H1 (cell line): ENCODE measurements at regions of chr5 and their contacts with region 1.

Region 1: GRCh38 chr5:139844472-139845145 is 49.0 kb downstream of the PSD2 start:
- DNase-seq: peak; percentile 64 to 92
- H3K4me3 ChIP-seq: no peak overlapping the region
- H3K27ac ChIP-seq: no peak overlapping the region
- H3K4me1 ChIP-seq: peaks cover 0 to 2% (median 1%) of the 10 kb centered on the region in 4 experiments; a peak in 5 of 7 replicates
- H3K27me3 ChIP-seq: peaks cover 16 to 50% (median 44%) of the 10 kb centered on the region in 4 experiments
- CTCF ChIP-seq: peak; percentile 93 to 97 (median 96)
- EP300 ChIP-seq: no peak
- POLR2A ChIP-seq: no peak
- RAD21 ChIP-seq: peak; percentile 88 to 90

Region 2: DNA sequence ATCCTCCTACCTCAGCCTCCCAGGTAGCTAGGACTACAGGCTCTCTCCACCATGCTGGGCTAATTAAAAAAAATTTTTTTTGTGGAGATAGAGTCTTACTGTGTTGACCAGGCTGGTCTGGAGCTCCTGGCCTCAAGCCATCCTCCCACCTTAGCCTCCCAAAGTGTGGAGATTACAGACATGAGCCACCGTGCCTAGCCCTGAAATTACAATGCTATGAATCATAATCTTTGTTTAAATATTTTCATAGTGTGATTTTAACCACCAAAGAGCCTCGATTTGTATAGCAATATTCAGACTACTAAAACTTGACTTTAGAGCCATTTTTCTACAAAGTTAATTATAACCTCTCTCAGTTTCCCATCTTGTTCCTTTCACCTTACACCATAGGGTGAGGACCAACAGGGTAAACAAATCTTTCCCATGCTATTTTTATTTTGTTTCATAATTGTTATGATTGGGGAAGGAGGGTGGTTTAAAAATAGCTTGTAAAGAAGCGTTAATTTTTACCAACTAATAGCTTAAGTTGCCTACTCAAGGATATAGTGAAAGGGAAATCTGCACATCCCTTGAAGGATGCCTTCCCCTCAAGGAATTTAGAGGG is 250.8 kb before region 1 on chr5:
- CTCF ChIA-PET with region 1: no interaction called
- POLR2A ChIA-PET with region 1: no interaction called
- DNase-seq: no peak
- H3K4me3 ChIP-seq: no peak overlapping the region
- H3K27ac ChIP-seq: no peak overlapping the region
- H3K4me1 ChIP-seq: peaks cover 0 to 2% (median 0%) of the 10 kb centered on the region in 4 experiments; a peak in 1 of 7 replicates
- H3K27me3 ChIP-seq: no peaks in the 10 kb centered on the region
- CTCF ChIP-seq: no peak
- EP300 ChIP-seq: no peak
- POLR2A ChIP-seq: no peak
- RAD21 ChIP-seq: no peak

Region 3: DNA sequence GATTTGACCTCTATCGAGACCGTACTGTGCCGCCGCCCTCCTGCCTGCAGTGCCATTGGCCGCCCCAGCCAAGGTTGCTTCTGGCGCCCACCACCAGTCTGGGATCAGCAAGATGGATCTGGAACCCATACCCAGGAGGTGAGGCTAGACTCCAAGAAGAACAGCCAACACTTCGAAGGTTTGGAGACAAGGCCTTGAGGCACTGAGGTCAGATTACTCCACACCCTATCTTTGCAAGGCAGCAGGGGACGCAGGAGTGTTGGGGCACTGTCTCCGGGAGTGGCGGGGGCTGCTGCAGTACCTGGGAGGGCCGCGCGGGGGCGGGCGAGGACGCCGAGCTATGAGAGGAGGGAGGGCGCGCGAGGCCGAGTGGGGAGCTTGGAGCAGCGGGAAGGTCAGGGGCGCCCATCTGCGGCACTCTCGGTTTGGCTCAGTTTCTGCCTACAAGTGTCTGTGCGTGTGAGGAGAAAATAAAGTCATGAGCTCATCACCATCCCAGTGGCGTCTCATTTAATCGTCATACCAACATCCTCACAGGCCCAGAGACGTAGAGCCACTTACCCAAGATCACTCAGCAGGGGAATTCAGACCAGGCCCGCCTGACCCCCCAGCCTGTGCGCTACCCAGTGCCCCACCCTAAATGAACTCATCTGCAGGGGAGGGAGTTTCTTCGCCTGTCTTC is 69.5 kb before region 1 on chr5:
- CTCF ChIA-PET with region 1: interaction called, 37 read pairs
- POLR2A ChIA-PET with region 1: no interaction called
- DNase-seq: peak; percentile 63 to 100
- H3K4me3 ChIP-seq: peak overlapping the region in 1 of 4 experiments; percentile 28; a peak in 1 of 8 replicates
- H3K27ac ChIP-seq: no peak overlapping the region
- H3K4me1 ChIP-seq: peaks cover 0 to 5% (median 4%) of the 10 kb centered on the region in 4 experiments; a peak in 4 of 7 replicates
- H3K27me3 ChIP-seq: peaks cover 0 to 5% (median 2%) of the 10 kb centered on the region in 4 experiments; a peak in 3 of 7 replicates
- CTCF ChIP-seq: peak in 2 of 3 experiments; percentile 96 to 97; a peak in 3 of 4 replicates
- EP300 ChIP-seq: no peak
- POLR2A ChIP-seq: no peak
- RAD21 ChIP-seq: peak; percentile 61 to 73

Region 4: GRCh38 chr5:139795074-139796001 is 49.3 kb before region 1 on chr5 and contains the start of gene PSD2:
- CTCF ChIA-PET with region 1: interaction called, 75 read pairs
- POLR2A ChIA-PET with region 1: no interaction called
- DNase-seq: peak in 1 of 2 experiments; percentile 73
- H3K4me3 ChIP-seq: peak within 1 kb of the TSS; percentile 35 to 81 (median 50)
- H3K27ac ChIP-seq: no peak within 1 kb of the TSS
- H3K4me1 ChIP-seq: peaks cover 2 to 7% (median 2%) of the 10 kb centered on the region in 4 experiments; a peak in 3 of 7 replicates
- H3K27me3 ChIP-seq: peaks cover 41 to 74% (median 61%) of the 10 kb centered on the region in 4 experiments
- CTCF ChIP-seq: no peak
- EP300 ChIP-seq: no peak
- POLR2A ChIP-seq: no peak
- RAD21 ChIP-seq: no peak
- total RNA-seq, gene PSD2: 0.06 and 0.13 TPM in 2 replicates

Region 5: DNA sequence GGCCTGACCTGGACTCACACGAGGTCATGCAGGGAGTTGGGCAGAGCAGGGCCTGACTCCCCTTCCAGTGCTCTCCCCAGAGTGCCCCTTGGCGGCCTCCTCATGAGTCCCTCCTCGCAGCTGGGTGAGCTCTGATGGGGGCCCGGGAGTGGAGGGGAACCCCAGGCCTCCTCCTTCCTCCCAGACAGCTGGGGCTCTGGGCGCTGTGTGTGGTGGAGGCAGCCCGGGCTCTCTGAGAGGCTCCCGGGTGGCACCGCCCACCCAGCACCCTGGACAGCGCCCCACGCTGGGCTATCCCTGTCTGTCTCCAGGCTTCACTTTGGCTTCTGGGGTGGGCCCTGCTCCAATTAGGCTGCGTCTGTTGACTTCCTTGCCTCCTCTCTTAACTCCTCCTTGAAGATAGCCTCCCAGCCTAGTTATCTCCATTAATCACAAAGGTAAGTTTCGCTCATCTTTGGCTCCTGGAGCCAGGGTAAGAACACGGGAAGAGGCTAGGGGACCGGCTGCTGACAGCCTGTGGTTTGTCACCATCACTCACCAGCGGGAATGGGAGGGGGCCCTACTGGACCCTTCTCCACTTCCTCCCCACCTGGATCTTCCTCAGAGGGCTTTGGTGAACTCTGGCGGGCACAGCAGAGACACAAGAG is 36.0 kb before region 1 on chr5:
- CTCF ChIA-PET with region 1: interaction called, 34 read pairs
- POLR2A ChIA-PET with region 1: no interaction called
- DNase-seq: peak in 1 of 2 experiments; percentile 88
- H3K4me3 ChIP-seq: no peak overlapping the region
- H3K27ac ChIP-seq: no peak overlapping the region
- H3K4me1 ChIP-seq: no peaks in the 10 kb centered on the region
- H3K27me3 ChIP-seq: peaks cover 0 to 3% (median 1%) of the 10 kb centered on the region in 4 experiments; a peak in 1 of 7 replicates
- CTCF ChIP-seq: no peak
- EP300 ChIP-seq: no peak
- POLR2A ChIP-seq: no peak
- RAD21 ChIP-seq: no peak

Region 6: GRCh38 chr5:139822553-139823425 is 21.8 kb before region 1 on chr5:
- CTCF ChIA-PET with region 1: interaction called, 42 read pairs
- POLR2A ChIA-PET with region 1: interaction called, 3 read pairs
- DNase-seq: no peak
- H3K4me3 ChIP-seq: no peak overlapping the region
- H3K27ac ChIP-seq: no peak overlapping the region
- H3K4me1 ChIP-seq: peaks cover 0 to 7% (median under 1%) of the 10 kb centered on the region in 4 experiments; a peak in 6 of 7 replicates
- H3K27me3 ChIP-seq: no peaks in the 10 kb centered on the region
- CTCF ChIP-seq: no peak
- EP300 ChIP-seq: no peak
- POLR2A ChIP-seq: no peak
- RAD21 ChIP-seq: no peak

Region 7: GRCh38 chr5:139856714-139857113 is 12.1 kb after region 1 on chr5:
- CTCF ChIA-PET with region 1: interaction called, 42 read pairs
- POLR2A ChIA-PET with region 1: interaction called, 3 read pairs
- DNase-seq: no peak
- H3K4me3 ChIP-seq: no peak overlapping the region
- H3K27ac ChIP-seq: no peak overlapping the region
- H3K4me1 ChIP-seq: no peaks in the 10 kb centered on the region
- H3K27me3 ChIP-seq: peaks cover 0 to 7% (median 0%) of the 10 kb centered on the region in 4 experiments; a peak in 2 of 7 replicates
- CTCF ChIP-seq: no peak
- EP300 ChIP-seq: no peak
- POLR2A ChIP-seq: no peak
- RAD21 ChIP-seq: no peak

Region 8: GRCh38 chr5:139925650-139926640 is 81.3 kb after region 1 on chr5:
- CTCF ChIA-PET with region 1: no interaction called
- POLR2A ChIA-PET with region 1: no interaction called
- DNase-seq: peak in 1 of 2 experiments; percentile 38
- H3K4me3 ChIP-seq: no peak overlapping the region
- H3K27ac ChIP-seq: no peak overlapping the region
- H3K4me1 ChIP-seq: peaks cover 0 to 2% (median 0%) of the 10 kb centered on the region in 4 experiments; a peak in 1 of 7 replicates
- H3K27me3 ChIP-seq: no peaks in the 10 kb centered on the region; a peak in 3 of 7 replicates
- CTCF ChIP-seq: no peak
- EP300 ChIP-seq: no peak
- POLR2A ChIP-seq: no peak
- RAD21 ChIP-seq: no peak